WTC11 (cell line): ENCODE measurements at regions of chr14 and their contacts with region 1.

Region 1: DNA sequence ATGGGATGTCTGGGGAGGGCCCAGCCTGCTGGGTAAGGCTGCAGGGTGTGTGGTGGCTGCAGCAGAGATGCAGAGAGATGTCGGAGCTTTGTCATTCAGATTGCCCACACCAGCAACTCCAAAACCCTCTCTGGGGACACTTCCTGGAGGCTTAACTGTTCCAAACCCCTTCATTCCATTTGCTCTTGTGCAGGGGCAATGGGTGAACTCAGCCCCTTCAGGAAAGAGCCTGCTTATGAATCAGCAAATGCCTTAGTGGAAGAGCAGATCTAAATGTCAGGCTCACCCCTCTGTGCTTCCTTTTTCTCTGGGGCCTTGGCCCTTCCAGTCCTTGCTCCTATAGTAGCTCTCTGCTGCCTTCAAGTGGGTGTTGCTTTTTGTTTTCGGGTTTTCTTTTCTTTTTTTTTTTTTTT is 36.7 kb upstream of the GPATCH2L start:
- DNase-seq: no peak
- ATAC-seq: peak; percentile 64
- H3K4me3 Mint-ChIP-seq: peak overlapping the region; percentile 20; the same call in 1 of the 2 replicates
- H3K27ac Mint-ChIP-seq: peak overlapping the region; percentile 81
- H3K4me1 Mint-ChIP-seq: peaks cover 57% of the 10 kb centered on the region
- H3K27me3 Mint-ChIP-seq: no peaks in the 10 kb centered on the region
- CTCF ChIP-seq: no peak

Region 2: GRCh38 chr14:75769047-75769685 is 345.9 kb before region 1 on chr14:
- CTCF ChIA-PET with region 1: no interaction called
- POLR2A ChIA-PET with region 1: no interaction called
- DNase-seq: no peak
- ATAC-seq: no peak
- H3K4me3 Mint-ChIP-seq: no peak overlapping the region
- H3K27ac Mint-ChIP-seq: no peak overlapping the region
- H3K4me1 Mint-ChIP-seq: no peaks in the 10 kb centered on the region
- H3K27me3 Mint-ChIP-seq: no peaks in the 10 kb centered on the region
- CTCF ChIP-seq: no peak

Region 3: DNA sequence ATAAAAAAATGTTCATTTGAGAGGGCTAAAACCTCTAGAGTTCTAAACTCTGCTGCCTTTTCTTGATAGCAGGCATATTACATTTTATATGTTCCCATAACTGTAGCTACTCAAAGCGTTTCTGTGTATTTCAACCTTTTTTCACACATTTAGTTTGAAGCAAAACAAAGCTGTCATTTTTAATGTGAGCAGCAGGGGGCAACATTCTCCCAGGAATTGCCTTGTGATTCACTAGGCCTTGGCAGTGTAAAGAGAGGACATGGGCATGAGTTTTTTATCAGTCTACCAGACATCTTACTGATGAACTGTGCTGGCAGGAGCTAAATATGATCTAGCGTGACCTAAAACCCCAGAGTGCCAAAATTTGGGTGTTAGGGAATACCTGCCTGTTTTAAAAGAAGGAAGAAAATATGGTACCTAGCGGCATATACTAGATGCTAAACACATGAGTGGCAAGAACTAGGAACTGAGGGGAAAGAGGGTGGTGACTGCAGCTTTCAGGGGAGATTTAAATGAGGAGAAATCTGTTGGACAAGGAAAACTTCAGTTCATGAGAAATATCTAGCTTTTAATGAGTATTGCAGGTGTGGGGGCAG is 64.1 kb before region 1 on chr14:
- CTCF ChIA-PET with region 1: interaction called, 17 read pairs
- POLR2A ChIA-PET with region 1: no interaction called
- DNase-seq: peak; percentile 61
- ATAC-seq: peak; percentile 51
- H3K4me3 Mint-ChIP-seq: no peak overlapping the region
- H3K27ac Mint-ChIP-seq: no peak overlapping the region
- H3K4me1 Mint-ChIP-seq: peaks cover 3% of the 10 kb centered on the region
- H3K27me3 Mint-ChIP-seq: no peaks in the 10 kb centered on the region
- CTCF ChIP-seq: peak; percentile 76

Region 4: DNA sequence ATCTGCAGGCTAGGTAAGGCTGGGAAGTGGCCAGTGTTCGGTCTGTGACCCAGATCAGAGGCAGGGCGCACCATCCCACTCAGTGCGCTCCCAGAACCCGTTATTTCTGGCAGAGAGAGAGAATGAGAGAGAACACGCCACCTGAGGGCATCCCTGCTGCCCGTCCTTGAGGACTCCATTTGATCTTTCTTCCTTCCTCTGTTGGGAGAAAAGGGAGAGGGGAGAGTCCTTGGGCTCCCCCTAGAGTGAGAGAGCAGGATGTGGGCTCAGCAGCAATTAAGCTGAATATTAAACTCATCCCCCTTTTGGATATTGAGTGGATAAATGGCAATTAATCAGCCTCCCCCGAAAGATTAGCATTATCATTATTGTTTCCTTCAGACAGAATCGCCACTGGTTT is 58.9 kb before region 1 on chr14:
- CTCF ChIA-PET with region 1: interaction called, 17 read pairs
- POLR2A ChIA-PET with region 1: no interaction called
- DNase-seq: peak; percentile 21
- ATAC-seq: peak; percentile 90
- H3K4me3 Mint-ChIP-seq: no peak overlapping the region
- H3K27ac Mint-ChIP-seq: peak overlapping the region; percentile 9; the same call in 1 of the 2 replicates
- H3K4me1 Mint-ChIP-seq: no peaks in the 10 kb centered on the region; the same call in 1 of the 2 replicates
- H3K27me3 Mint-ChIP-seq: no peaks in the 10 kb centered on the region
- CTCF ChIP-seq: no peak